ENCODE measurements at regions of chr15 and their contacts with region 1.

Region 1: DNA sequence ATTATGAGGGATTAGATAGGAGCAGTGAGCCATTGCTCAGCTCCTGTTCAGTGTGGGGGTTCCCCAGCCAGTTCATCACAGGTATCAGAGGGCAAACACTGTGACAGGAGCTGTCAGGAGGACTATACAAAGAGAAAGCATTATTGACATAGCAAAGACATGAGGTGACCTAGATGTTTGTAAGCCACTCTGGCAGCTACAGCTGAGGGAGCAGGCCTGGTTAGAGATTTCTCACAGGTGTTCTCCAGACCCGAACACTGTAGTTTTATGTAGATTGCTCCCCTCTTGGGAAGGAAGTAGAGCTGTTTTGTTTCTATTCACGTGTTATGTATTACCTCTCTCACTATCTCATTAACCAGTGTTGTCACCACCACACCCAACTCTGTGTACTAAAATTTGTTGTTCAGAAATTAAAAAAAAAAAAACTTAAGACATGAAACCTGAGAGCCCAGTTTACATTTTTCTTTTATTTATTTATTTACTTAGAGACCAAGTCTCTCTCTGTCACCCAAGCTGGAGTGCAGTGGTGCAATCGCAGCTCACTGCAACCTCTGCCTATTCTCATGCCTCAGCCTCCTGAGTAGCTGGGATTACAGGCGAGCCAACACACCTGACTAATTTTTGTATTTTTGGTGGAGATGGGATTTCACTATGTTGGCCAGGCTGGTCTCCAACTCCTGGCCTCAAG is 123.7 kb downstream of the RBPMS2 start:
- DNase-seq: peak; percentile 72
- H3K4me3 Mint-ChIP-seq: peak overlapping the region; percentile 7
- H3K27ac Mint-ChIP-seq: peak overlapping the region; percentile 78
- H3K4me1 Mint-ChIP-seq: peaks cover 44% of the 10 kb centered on the region
- H3K27me3 Mint-ChIP-seq: no peaks in the 10 kb centered on the region

Region 2: GRCh38 chr15:64209680-64210334 is 441.9 kb before region 1 on chr15:
- CTCF ChIA-PET with region 1: no interaction called
- intact Hi-C with region 1: loop called (anchors 5 kb)
- DNase-seq: peak; percentile 8
- H3K4me3 Mint-ChIP-seq: no peak overlapping the region
- H3K27ac Mint-ChIP-seq: no peak overlapping the region
- H3K4me1 Mint-ChIP-seq: peaks cover 3% of the 10 kb centered on the region
- H3K27me3 Mint-ChIP-seq: no peaks in the 10 kb centered on the region

Region 3: GRCh38 chr15:64430000-64430735 is 221.5 kb before region 1 on chr15:
- CTCF ChIA-PET with region 1: interaction called, 13 read pairs
- intact Hi-C with region 1: loop called (anchors 1 kb)
- DNase-seq: peak; percentile 50
- H3K4me3 Mint-ChIP-seq: no peak overlapping the region
- H3K27ac Mint-ChIP-seq: peak overlapping the region; percentile 76
- H3K4me1 Mint-ChIP-seq: peaks cover 45% of the 10 kb centered on the region
- H3K27me3 Mint-ChIP-seq: no peaks in the 10 kb centered on the region

Region 4: GRCh38 chr15:64532521-64533315 is 119.0 kb before region 1 on chr15:
- CTCF ChIA-PET with region 1: interaction called, 3 read pairs
- intact Hi-C with region 1: loop called (anchors 5 kb)
- DNase-seq: peak; percentile 54
- H3K4me3 Mint-ChIP-seq: peak overlapping the region; percentile 24
- H3K27ac Mint-ChIP-seq: peak overlapping the region; percentile 54
- H3K4me1 Mint-ChIP-seq: peaks cover 68% of the 10 kb centered on the region
- H3K27me3 Mint-ChIP-seq: no peaks in the 10 kb centered on the region

Region 5: DNA sequence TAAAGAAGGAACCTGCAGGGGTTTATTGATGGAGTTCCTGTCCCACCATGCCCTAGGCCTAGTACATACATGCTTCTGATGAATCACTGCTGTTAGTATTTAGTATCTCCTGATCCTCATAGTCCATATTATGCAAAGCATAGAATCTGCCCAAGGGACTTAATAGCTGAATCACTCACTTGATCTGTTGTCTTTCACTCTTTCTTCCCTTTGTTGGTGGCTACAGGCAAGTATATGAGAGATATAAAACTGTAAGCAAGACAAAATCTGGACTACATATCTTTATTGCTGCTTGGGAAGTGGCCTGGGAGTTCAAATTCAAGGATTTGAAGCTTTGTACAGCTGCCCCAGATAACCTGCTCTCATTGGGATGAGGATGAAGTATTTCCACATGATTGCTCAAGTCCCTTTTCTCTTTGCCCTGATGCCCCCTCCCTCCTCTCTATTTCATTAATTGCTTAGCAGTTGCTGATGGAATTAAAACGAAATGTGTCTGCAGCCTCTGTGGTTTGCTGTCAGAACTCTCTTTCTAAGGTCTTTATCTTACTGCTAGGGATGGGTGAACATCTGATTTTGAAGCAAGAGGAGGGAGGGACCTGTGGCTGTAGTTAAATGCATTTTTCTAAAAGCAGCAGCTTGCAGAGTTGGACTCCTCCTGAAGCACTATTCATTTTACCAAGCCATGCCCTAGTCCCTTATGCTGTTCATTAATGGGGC is 77.3 kb before region 1 on chr15:
- CTCF ChIA-PET with region 1: no interaction called
- intact Hi-C with region 1: no loop called
- DNase-seq: no peak
- H3K4me3 Mint-ChIP-seq: no peak overlapping the region
- H3K27ac Mint-ChIP-seq: peak overlapping the region; percentile 78
- H3K4me1 Mint-ChIP-seq: peaks cover 54% of the 10 kb centered on the region
- H3K27me3 Mint-ChIP-seq: no peaks in the 10 kb centered on the region

Region 6: DNA sequence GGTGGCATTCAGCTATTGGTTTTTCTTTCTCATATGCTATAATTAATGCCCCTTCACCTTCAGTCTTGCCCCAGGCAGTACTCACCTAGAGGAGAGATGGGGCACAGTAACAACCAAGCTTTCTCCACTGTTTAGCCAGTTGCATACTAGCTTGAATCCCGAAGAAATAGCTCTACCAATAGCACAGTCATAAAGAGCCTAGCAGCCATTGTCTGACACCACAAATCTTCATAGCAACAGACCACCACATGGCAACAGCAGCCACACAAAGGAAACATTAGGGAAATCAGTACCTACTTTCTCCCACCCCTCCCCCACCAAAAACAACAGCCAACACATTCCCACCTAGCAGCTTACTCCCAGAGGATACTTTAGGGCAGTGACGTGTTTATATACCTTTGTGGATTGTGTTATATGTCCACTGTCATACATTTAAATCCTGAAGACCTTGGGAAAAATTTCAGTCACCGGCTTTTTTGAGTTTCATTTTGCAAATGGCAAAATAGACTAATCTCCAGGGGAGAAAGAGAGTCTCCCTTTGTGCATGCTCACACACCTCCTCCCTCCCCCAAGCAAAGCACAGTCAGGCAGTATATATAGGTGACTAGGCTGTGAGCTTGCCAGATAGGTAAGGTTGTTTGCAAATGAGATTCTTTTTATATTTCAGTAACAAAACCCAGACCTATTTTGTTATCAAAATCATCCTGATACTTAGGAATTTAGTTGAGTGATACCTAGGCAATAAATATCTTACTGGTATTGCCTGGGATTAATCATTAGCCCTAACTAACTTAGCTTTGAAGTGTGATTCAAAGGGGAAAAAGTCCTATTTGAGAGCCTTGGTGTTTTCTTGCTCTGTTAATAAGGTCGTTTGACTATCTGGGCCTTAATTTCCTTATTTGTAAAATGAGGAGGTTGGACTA is 16.9 kb before region 1 on chr15:
- CTCF ChIA-PET with region 1: interaction called, 6 read pairs
- intact Hi-C with region 1: loop called (anchors 2 kb)
- DNase-seq: peak; percentile 60
- H3K4me3 Mint-ChIP-seq: peak overlapping the region; percentile 3
- H3K27ac Mint-ChIP-seq: peak overlapping the region; percentile 54
- H3K4me1 Mint-ChIP-seq: peaks cover 60% of the 10 kb centered on the region
- H3K27me3 Mint-ChIP-seq: no peaks in the 10 kb centered on the region

Region 7: GRCh38 chr15:64767203-64767602 is 115.5 kb after region 1 on chr15:
- CTCF ChIA-PET with region 1: no interaction called
- intact Hi-C with region 1: no loop called
- DNase-seq: peak; percentile 31
- H3K4me3 Mint-ChIP-seq: no peak overlapping the region
- H3K27ac Mint-ChIP-seq: no peak overlapping the region
- H3K4me1 Mint-ChIP-seq: no peaks in the 10 kb centered on the region
- H3K27me3 Mint-ChIP-seq: peaks cover 2% of the 10 kb centered on the region

Region 8: DNA sequence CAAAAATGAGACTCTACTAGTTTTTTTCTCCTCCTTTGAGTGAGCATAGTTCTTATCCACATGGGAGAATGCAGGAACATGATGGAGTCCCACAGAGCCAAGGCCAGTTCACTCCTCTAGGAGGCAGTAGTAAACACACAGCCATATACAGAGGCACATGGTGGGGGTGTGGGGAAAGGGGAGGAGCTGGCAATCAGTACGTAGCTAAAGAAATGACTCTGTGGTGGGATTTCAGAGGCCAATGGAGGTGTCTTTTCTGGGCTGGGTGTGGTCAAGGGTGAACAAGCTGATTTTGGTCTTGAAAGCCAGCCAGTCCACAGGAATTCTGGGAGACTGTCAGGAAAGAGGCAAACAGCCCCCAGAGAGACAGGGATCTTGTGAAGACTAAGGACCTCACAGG is 1211.0 kb after region 1 on chr15:
- CTCF ChIA-PET with region 1: no interaction called
- intact Hi-C with region 1: no loop called
- DNase-seq: peak; percentile 85
- H3K4me3 Mint-ChIP-seq: no peak overlapping the region
- H3K27ac Mint-ChIP-seq: no peak overlapping the region
- H3K4me1 Mint-ChIP-seq: peaks cover 12% of the 10 kb centered on the region
- H3K27me3 Mint-ChIP-seq: no peaks in the 10 kb centered on the region